GM13977 (cell line): ENCODE measurements at regions of chr15 and their contacts with region 1.

Region 1: DNA sequence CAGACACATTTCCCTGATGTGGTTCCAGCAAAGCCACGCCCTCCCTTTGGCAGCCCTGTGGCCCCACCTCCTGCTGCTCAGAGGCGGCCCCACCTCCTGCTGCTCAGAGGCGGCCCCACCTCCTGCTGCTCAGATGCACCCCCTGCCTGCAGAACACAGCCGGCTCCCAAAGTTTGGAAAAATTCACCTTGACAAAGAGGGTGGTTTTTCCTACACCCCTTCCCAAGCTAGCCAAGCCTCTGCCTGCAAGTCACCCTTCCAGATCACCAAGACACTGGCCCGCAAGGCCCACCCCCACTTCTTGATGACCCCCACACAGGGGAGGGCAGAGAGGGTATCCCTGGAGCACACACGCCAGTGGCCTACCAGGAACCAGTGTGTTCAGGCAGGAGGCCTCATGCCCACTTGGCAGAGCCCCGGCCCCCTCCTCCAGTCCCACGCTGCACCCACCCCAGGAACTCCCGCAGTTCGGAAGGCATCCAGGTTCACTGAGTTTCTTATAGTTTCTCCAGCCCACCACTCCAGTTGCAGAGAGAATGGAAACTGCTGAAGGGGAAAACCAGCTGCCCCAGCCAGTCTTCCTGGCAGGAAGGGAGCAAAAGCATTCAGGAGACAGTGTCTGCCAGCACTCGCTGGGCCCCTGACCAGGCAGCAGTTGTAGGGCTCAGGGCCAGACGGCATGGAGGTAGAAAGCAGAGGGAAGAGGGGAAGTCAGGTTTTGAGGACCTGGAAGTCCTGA is 2.3 kb upstream of the HAPLN3 start:
- DNase-seq: no peak
- CTCF ChIP-seq: peak; percentile 21

Region 2: GRCh38 chr15:89021224-89021623 is 123.6 kb after region 1 on chr15:
- in situ Hi-C with region 1: loop called (anchors 10 kb)
- DNase-seq: no peak
- CTCF ChIP-seq: no peak